K562 (cell line): ENCODE measurements at regions of chr17 and their contacts with region 1.

Region 1: GRCh38 chr17:34361478-34362061 is 1.5 kb downstream of the CCL1 start:
- DNase-seq: peak; percentile 83 to 88 (median 86)
- ATAC-seq: peak; percentile 99
- H3K4me3 ChIP-seq: no peak overlapping the region
- H3K27ac ChIP-seq: no peak overlapping the region
- H3K4me1 ChIP-seq: no peaks in the 10 kb centered on the region; a peak in 1 of 5 replicates
- H3K27me3 ChIP-seq: no peaks in the 10 kb centered on the region
- CTCF ChIP-seq: peak; percentile 99 to 100 (median 100)
- EP300 ChIP-seq: no peak
- POLR2A ChIP-seq: no peak
- RAD21 ChIP-seq: peak; percentile 99 to 100

Region 2: DNA sequence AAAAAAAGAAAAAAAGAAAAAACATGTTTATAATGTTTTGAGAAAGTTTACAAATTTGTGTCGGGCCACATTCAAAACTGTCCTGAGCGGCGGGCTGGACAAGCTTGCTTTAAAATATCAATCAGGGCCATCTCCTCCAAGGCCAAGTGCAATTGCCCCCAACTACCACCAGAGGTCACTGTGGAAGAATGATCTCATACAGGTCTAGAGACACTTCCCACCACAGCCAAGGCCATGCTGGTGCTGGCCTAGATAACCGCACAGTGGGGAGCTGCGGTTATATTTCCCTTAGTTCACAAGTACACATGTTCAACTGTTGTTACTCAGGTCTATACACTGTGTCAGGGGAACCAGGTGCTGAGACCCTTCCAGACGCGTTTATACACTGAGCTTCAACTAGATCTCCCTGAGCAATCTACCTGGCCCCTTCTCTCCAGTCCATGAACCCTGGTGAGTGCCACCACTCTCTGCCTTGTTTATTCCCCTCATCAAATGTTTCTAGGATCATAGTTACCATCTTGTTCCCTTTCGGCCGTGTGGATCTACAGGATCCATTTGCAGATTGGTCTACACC is 190.2 kb before region 1 on chr17:
- CTCF ChIA-PET with region 1: interaction called, 12 read pairs
- POLR2A ChIA-PET with region 1: no interaction called
- in situ Hi-C with region 1: no loop called
- intact Hi-C with region 1: no loop called
- DNase-seq: peak; percentile 80 to 84 (median 84)
- ATAC-seq: peak; percentile 97
- H3K4me3 ChIP-seq: no peak overlapping the region
- H3K27ac ChIP-seq: no peak overlapping the region
- H3K4me1 ChIP-seq: peaks cover 0 to 3% of the 10 kb centered on the region in 2 experiments; a peak in 1 of 5 replicates
- H3K27me3 ChIP-seq: no peaks in the 10 kb centered on the region
- CTCF ChIP-seq: peak; percentile 81 to 92 (median 89)
- EP300 ChIP-seq: no peak
- POLR2A ChIP-seq: no peak
- RAD21 ChIP-seq: peak; percentile 32 to 58

Region 3: DNA sequence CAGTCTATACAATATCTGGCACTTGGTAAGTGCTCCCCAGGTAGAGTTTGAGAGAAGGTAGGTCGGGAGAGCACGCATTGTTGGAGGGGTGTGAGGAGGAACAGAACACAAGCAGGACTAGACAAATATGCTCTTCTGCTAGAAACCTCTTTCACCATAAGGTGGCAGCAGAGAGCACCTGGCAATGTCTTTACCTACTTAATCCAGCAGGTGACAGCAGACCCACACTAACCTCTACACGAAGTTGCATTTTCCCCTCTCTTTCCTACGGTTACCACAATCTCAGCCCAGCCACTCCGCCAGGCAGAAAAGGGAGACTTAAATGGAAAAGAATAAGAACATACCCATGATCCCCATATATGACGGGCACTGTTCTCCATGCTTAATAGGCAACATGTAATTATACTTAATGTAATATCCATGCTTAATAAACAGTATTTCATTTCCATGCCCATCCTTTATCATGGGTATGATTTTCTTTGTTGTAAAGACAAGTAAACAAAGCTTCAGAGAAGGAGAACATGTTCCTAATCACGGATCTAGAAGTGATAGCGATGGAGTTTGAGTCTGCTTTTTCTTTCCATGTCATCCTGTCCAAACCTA is 161.5 kb before region 1 on chr17:
- CTCF ChIA-PET with region 1: interaction called, 214 read pairs
- POLR2A ChIA-PET with region 1: interaction called, 6 read pairs
- in situ Hi-C with region 1: loop called (anchors 5 kb)
- intact Hi-C with region 1: loop called (anchors 1 kb)
- DNase-seq: peak; percentile 79 to 85 (median 80)
- ATAC-seq: peak; percentile 91
- H3K4me3 ChIP-seq: no peak overlapping the region
- H3K27ac ChIP-seq: no peak overlapping the region
- H3K4me1 ChIP-seq: no peaks in the 10 kb centered on the region
- H3K27me3 ChIP-seq: peaks cover 0 to 6% of the 10 kb centered on the region in 2 experiments; a peak in 1 of 5 replicates
- CTCF ChIP-seq: peak; percentile 99 to 100 (median 100)
- EP300 ChIP-seq: no peak
- POLR2A ChIP-seq: no peak
- RAD21 ChIP-seq: peak; percentile 99 to 100

Region 4: GRCh38 chr17:34269969-34270368 is 91.6 kb before region 1 on chr17 and contains the start of gene CCL7:
- CTCF ChIA-PET with region 1: no interaction called
- POLR2A ChIA-PET with region 1: no interaction called
- in situ Hi-C with region 1: no loop called
- intact Hi-C with region 1: no loop called
- DNase-seq: no peak
- ATAC-seq: no peak
- H3K4me3 ChIP-seq: no peak within 1 kb of the TSS
- H3K27ac ChIP-seq: no peak within 1 kb of the TSS
- H3K4me1 ChIP-seq: no peaks in the 10 kb centered on the region
- H3K27me3 ChIP-seq: no peaks in the 10 kb centered on the region
- CTCF ChIP-seq: no peak
- EP300 ChIP-seq: no peak
- POLR2A ChIP-seq: no peak
- RAD21 ChIP-seq: no peak
- polyA plus RNA-seq, gene CCL7: not detected

Region 5: DNA sequence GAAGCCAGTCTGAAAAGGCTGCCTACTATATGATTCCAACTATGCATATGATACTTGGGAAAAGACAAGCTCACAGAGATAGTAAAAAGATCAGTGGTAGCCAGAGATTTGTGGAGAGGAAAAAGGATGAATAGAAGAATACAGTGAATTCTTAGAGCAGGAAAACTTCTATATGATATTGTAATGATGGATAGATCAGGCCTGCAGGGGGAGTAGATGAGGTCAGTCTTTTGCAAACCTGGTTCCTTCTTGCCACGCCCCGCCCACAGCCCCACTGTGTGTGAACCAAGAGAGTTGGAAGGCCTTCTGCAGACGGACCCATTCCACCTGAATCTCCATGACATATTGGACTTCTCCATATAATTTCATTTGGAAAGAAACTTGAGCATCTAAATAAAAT is 43.1 kb before region 1 on chr17:
- CTCF ChIA-PET with region 1: no interaction called
- POLR2A ChIA-PET with region 1: no interaction called
- in situ Hi-C with region 1: no loop called
- intact Hi-C with region 1: loop called (anchors 5 kb)
- DNase-seq: peak; percentile 48 to 59 (median 54)
- ATAC-seq: peak; percentile 89
- H3K4me3 ChIP-seq: no peak overlapping the region
- H3K27ac ChIP-seq: no peak overlapping the region
- H3K4me1 ChIP-seq: no peaks in the 10 kb centered on the region; a peak in 1 of 5 replicates
- H3K27me3 ChIP-seq: no peaks in the 10 kb centered on the region
- CTCF ChIP-seq: peak; percentile 36 to 54 (median 52)
- EP300 ChIP-seq: no peak
- POLR2A ChIP-seq: no peak
- RAD21 ChIP-seq: peak in 1 of 2 experiments; percentile 22; a peak in 1 of 4 replicates